ENCODE measurements at regions of chr7 and their contacts with region 1.

Region 1: GRCh38 chr7:127287133-127287532 is 34.4 kb upstream of the GRM8 start:
- DNase-seq: no peak
- ATAC-seq: no peak
- H3K4me3 ChIP-seq: no peak overlapping the region
- H3K27ac ChIP-seq: no peak overlapping the region
- H3K4me1 ChIP-seq: no peaks in the 10 kb centered on the region
- H3K27me3 ChIP-seq: peaks cover 28% of the 10 kb centered on the region
- CTCF ChIP-seq: no peak
- POLR2A ChIP-seq: no peak
- RAD21 ChIP-seq: no peak

Region 2: GRCh38 chr7:127347567-127348246 is 60.6 kb after region 1 on chr7:
- CTCF ChIA-PET with region 1: no interaction called
- POLR2A ChIA-PET with region 1: no interaction called
- RAD21 ChIA-PET with region 1: no interaction called
- intact Hi-C with region 1: loop called (anchors 10 kb)
- DNase-seq: no peak
- ATAC-seq: no peak
- H3K4me3 ChIP-seq: no peak overlapping the region
- H3K27ac ChIP-seq: no peak overlapping the region
- H3K4me1 ChIP-seq: no peaks in the 10 kb centered on the region
- H3K27me3 ChIP-seq: no peaks in the 10 kb centered on the region
- CTCF ChIP-seq: no peak
- POLR2A ChIP-seq: no peak
- RAD21 ChIP-seq: no peak

Region 3: DNA sequence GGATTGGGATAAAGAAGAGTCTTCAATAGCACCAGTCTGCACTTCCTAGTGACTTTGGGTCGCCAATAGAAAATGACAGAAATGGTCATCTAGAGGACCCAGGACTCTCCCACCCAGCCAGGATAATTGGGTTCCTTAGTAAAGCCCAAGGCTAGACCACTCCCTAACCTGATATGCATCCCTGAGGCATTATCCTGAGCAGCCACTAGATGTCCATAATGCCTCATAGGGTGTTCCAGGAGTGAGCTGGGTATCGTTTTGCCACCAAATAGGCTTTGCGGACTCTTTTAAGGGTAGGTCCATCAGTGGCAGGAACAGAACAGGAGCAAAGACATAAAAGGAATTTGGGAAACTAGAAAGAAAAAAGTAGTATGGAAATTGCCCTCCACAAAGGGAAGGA is 748.6 kb after region 1 on chr7:
- CTCF ChIA-PET with region 1: no interaction called
- POLR2A ChIA-PET with region 1: no interaction called
- RAD21 ChIA-PET with region 1: no interaction called
- intact Hi-C with region 1: no loop called
- DNase-seq: no peak
- ATAC-seq: peak; percentile 81
- H3K4me3 ChIP-seq: no peak overlapping the region
- H3K27ac ChIP-seq: no peak overlapping the region
- H3K4me1 ChIP-seq: peaks cover 2 to 15% of the 10 kb centered on the region in 2 experiments; a peak in 3 of 4 replicates
- H3K27me3 ChIP-seq: no peaks in the 10 kb centered on the region
- CTCF ChIP-seq: peak; percentile 35 to 55 (median 47); a peak in 5 of 6 replicates
- POLR2A ChIP-seq: no peak
- RAD21 ChIP-seq: peak; percentile 45; the same call in 1 of the 2 replicates

Measured in HCT116 (cell line).